ENCODE measurements at regions of chr7 and their contacts with region 1.

Region 1: DNA sequence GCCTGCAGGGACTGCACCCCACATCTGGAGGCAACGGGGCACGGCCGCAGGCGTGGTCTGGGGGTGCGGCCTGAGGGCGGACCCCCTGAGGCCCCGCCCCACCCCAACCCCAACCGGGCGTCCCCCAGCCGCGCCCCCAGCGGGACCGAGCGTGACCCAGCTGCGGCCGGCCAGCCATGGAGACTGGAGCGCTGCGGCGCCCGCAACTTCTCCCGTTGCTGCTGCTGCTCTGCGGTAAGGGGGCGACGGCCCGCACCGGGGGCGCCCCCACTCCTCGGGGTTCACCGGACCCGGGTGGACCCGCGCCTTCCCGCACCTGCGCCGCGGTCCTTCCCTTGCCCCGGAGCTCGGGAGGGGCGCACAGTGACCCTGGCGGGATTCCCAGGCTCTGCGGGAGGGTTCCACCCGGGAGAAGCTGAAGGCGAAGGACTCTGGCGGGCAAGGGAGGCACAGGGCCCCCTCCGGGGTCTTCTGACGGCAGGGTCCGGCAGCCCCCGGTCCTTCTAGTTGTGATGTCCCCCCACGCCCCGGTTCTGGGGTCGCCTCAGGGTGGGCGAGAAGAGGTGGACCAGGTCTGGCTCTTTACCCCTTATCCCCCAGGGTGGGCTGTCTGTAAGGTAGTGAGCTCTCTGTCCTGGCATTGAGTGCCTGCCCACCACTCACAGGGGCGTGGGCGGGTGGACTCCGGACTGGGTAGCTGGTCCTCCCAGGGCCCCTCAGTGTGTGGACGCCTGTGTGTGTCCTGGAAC is at the start of gene RAMP3:
- DNase-seq: no peak
- H3K4me3 ChIP-seq: peak within 1 kb of the TSS; percentile 5 to 19
- H3K27ac ChIP-seq: no peak within 1 kb of the TSS
- H3K4me1 ChIP-seq: no peaks in the 10 kb centered on the region
- H3K27me3 ChIP-seq: peaks cover 10% of the 10 kb centered on the region
- CTCF ChIP-seq: no peak
- POLR2A ChIP-seq: no peak
- total RNA-seq, gene RAMP3: 35.8 to 43.5 TPM

Region 2: GRCh38 chr7:45259966-45260646 is 102.3 kb after region 1 on chr7:
- intact Hi-C with region 1: loop called (anchors 2 kb)
- DNase-seq: peak; percentile 22
- H3K4me3 ChIP-seq: no peak overlapping the region
- H3K27ac ChIP-seq: no peak overlapping the region
- H3K4me1 ChIP-seq: no peaks in the 10 kb centered on the region
- H3K27me3 ChIP-seq: no peaks in the 10 kb centered on the region
- CTCF ChIP-seq: peak; percentile 82 to 93 (median 87)
- POLR2A ChIP-seq: no peak

Region 3: GRCh38 chr7:45324791-45325190 is 167.0 kb after region 1 on chr7:
- intact Hi-C with region 1: no loop called
- DNase-seq: no peak
- H3K4me3 ChIP-seq: no peak overlapping the region
- H3K27ac ChIP-seq: no peak overlapping the region
- H3K4me1 ChIP-seq: no peaks in the 10 kb centered on the region
- H3K27me3 ChIP-seq: no peaks in the 10 kb centered on the region
- CTCF ChIP-seq: no peak
- POLR2A ChIP-seq: no peak

Region 4: GRCh38 chr7:45863715-45864114 is 705.9 kb after region 1 on chr7:
- intact Hi-C with region 1: loop called (anchors 10 kb)
- DNase-seq: no peak
- H3K4me3 ChIP-seq: no peak overlapping the region
- H3K27ac ChIP-seq: no peak overlapping the region
- H3K4me1 ChIP-seq: no peaks in the 10 kb centered on the region
- H3K27me3 ChIP-seq: no peaks in the 10 kb centered on the region
- CTCF ChIP-seq: no peak
- POLR2A ChIP-seq: no peak